ENCODE measurements at regions of chr3 and their contacts with region 1.

Region 1: GRCh38 chr3:58008140-58009025 is at the start of gene FLNB:
- DNase-seq: peak; percentile 61 to 83 (median 77)
- ATAC-seq: peak; percentile 95
- H3K4me3 ChIP-seq: peak within 1 kb of the TSS; percentile 100
- H3K4me3 Mint-ChIP-seq: peak within 1 kb of the TSS; percentile 78 to 93 (median 90)
- H3K27ac ChIP-seq: peak within 1 kb of the TSS; percentile 66
- H3K27ac Mint-ChIP-seq: peak within 1 kb of the TSS; percentile 61 to 95 (median 81)
- H3K4me1 ChIP-seq: peaks cover 9 to 32% of the 10 kb centered on the region in 2 donors
- H3K4me1 Mint-ChIP-seq: peaks cover 30 to 42% (median 41%) of the 10 kb centered on the region in 7 donors
- H3K27me3 ChIP-seq: no peaks in the 10 kb centered on the region
- H3K27me3 Mint-ChIP-seq: no peaks in the 10 kb centered on the region
- total RNA-seq, gene FLNB: 39.3 to 66.7 (median 64.9) TPM

Region 2: DNA sequence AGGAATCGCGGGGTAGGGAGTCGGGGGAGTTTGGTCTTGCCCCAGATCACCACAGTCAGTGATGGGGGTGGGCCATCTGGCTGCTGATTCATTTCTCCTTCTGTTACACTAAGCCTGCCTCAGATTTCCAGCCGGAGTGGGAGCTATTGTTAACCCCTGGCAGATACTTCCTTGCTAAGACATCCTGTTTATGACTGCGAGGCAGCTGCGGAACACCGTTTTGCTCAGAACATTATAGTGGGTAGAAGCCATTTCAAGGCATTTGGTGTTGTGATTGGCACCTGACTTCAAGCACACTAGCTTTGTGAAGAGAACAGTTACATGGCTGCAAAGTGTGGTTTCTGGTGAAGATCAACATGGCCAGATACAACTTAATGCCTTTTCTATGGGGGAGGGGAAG is 73.7 kb after region 1 on chr3:
- CTCF ChIA-PET with region 1: interaction called, 4 read pairs
- POLR2A ChIA-PET with region 1: interaction called, 20 read pairs
- intact Hi-C with region 1: loop called (anchors 1 to 5 kb)
- DNase-seq: peak in 8 of 9 donors; percentile 27 to 82 (median 69)
- ATAC-seq: peak; percentile 79
- H3K4me3 ChIP-seq: no peak overlapping the region
- H3K4me3 Mint-ChIP-seq: peak overlapping the region; percentile 46 to 83 (median 76)
- H3K27ac ChIP-seq: peak overlapping the region; percentile 38
- H3K27ac Mint-ChIP-seq: peak overlapping the region; percentile 85 to 97 (median 94)
- H3K4me1 ChIP-seq: peaks cover 0 to 54% of the 10 kb centered on the region in 2 donors
- H3K4me1 Mint-ChIP-seq: peaks cover 35 to 71% (median 56%) of the 10 kb centered on the region in 7 donors
- H3K27me3 ChIP-seq: no peaks in the 10 kb centered on the region
- H3K27me3 Mint-ChIP-seq: no peaks in the 10 kb centered on the region

Region 3: DNA sequence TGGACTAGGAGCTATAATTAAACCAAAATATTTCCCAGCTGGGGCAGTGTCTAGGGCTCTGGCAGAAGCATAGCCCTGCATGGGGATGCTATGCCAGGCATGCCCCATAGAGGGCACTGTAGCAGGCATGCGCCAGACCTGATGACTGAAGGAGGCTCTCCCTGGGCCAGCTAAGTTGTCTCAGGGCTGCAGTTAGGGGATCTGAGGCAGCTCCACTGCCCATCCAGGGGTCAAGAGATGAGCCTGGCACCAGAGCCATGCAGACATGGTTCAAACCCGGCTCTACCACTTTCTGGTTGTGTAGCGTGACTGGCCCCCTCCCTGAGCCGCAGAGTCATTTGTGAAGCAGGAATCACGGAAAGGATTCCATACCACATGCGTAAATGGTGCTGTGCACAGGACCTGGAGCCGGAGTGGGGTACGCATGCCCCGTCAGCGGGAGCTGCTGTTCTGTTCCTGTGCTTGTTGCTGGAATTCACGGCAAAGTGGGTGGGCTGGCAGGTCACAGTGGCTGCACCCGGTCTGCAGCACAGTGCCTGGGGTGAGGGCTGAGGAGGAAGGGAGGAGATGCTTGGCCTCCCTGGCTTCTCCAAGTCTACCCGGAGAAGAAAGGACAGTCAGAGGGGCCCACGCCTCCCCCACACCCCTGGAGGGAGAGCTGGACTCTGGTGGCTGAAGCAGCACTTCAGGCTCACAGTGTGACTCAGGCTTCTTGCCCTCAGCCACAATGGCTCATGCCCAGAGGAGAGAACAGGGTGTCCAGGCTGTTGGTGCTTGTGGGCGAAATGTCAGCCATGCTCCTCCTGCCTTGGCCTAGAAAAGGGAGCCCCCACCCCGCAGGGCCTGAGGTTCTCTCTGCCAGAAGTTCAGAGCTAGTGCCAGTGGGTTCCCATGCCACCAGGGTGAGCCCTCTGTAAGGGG is 159.3 kb after region 1 on chr3:
- CTCF ChIA-PET with region 1: interaction called, 22 read pairs
- POLR2A ChIA-PET with region 1: interaction called, 3 read pairs
- intact Hi-C with region 1: no loop called
- DNase-seq: peak; percentile 16 to 66 (median 42)
- ATAC-seq: peak; percentile 92
- H3K4me3 ChIP-seq: no peak overlapping the region
- H3K4me3 Mint-ChIP-seq: no peak overlapping the region
- H3K27ac ChIP-seq: no peak overlapping the region
- H3K27ac Mint-ChIP-seq: peak overlapping the region in 2 of 9 donors; percentile 19 to 33
- H3K4me1 ChIP-seq: no peaks in the 10 kb centered on the region
- H3K4me1 Mint-ChIP-seq: no peaks in the 10 kb centered on the region
- H3K27me3 ChIP-seq: no peaks in the 10 kb centered on the region
- H3K27me3 Mint-ChIP-seq: no peaks in the 10 kb centered on the region

Region 4: DNA sequence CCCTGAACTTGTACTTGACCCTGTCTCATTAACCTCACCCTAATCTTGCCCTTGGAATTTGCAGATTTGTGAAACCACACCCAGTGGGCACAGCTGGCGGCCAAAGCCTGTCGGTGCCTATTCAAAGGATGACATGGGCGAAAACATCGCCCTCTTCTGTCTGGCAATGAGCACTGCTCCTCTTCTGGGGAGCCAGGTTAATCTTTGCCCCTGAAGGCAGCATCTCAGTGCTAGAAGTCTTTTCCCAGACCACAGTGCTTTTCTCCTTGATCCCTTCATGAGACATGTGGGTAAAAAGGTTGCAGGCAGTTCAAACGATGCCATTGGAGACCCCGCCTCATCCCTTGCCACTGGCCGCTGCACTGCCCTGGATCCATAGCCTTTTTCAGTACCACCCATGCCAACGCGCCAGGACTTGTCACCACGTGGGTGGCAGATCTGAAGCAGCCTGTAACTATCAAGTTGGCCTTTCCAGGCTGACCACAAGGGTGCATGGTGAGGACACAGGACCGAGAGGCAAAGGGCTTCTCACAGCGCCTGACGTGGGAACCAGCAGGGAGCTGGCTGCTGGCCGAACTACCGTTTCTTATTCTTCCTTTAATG is 208.9 kb after region 1 on chr3:
- CTCF ChIA-PET with region 1: interaction called, 11 read pairs
- POLR2A ChIA-PET with region 1: no interaction called
- intact Hi-C with region 1: loop called (anchors 1 kb)
- DNase-seq: peak; percentile 21 to 64 (median 52)
- ATAC-seq: peak; percentile 86
- H3K4me3 ChIP-seq: no peak overlapping the region
- H3K4me3 Mint-ChIP-seq: peak overlapping the region in 4 of 10 donors; percentile 12 to 45 (median 26)
- H3K27ac ChIP-seq: no peak overlapping the region
- H3K27ac Mint-ChIP-seq: no peak overlapping the region
- H3K4me1 ChIP-seq: peaks cover 0 to 3% of the 10 kb centered on the region in 2 donors
- H3K4me1 Mint-ChIP-seq: peaks cover 0 to 17% (median 7%) of the 10 kb centered on the region in 7 donors
- H3K27me3 ChIP-seq: no peaks in the 10 kb centered on the region
- H3K27me3 Mint-ChIP-seq: peaks cover 3 to 10% (median 4%) of the 10 kb centered on the region in 5 donors

Region 5: DNA sequence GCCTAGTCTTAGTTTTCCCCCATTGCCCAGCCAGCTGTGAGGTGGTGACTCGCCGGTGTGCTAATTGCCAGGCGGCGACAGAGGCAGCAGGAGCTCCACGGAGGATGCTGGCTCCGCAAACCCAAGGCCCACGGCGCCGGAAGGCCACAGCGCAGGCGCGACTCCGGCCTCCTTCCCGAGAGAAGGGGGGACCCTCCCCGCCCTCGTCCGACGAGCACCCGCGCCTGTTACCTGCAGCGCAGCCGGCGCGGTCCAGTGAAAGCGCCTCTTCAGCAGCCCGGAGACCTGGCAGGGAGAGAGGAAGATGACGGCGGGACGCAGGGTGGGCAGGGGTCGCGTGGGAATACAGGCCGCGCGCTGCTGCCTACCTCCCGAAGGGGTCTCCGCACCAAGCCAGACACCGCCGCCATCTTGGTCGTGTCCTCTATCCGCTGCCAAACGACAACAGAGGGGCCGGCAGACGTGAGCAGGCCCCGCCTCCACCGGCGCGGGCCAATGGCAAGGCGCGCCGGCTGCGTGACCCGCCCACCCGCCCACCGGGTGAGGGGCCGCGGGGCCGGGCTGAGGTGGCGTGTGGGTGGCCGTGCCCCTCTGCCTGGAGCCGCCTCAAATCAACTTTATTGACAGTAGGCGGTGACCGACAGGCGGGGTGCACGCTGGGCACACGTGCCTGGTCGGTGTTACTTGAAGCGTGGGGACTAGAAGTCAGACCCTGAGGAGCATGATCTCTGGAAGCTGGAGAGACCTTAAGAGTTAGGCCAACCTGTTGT is 425.2 kb after region 1 on chr3 and contains the start of gene PDHB:
- CTCF ChIA-PET with region 1: no interaction called
- POLR2A ChIA-PET with region 1: no interaction called
- intact Hi-C with region 1: no loop called
- DNase-seq: peak; percentile 78 to 91 (median 90)
- ATAC-seq: peak; percentile 98
- H3K4me3 ChIP-seq: peak within 1 kb of the TSS; percentile 92
- H3K4me3 Mint-ChIP-seq: peak within 1 kb of the TSS; percentile 90 to 98 (median 95)
- H3K27ac ChIP-seq: peak within 1 kb of the TSS; percentile 81
- H3K27ac Mint-ChIP-seq: peak within 1 kb of the TSS; percentile 94 to 98 (median 97)
- H3K4me1 ChIP-seq: peaks cover 14 to 15% of the 10 kb centered on the region in 2 donors
- H3K4me1 Mint-ChIP-seq: peaks cover 15 to 34% (median 27%) of the 10 kb centered on the region in 7 donors
- H3K27me3 ChIP-seq: no peaks in the 10 kb centered on the region
- H3K27me3 Mint-ChIP-seq: peaks cover 0 to 9% (median 0%) of the 10 kb centered on the region in 5 donors
- total RNA-seq, gene PDHB: 30.1 to 58.1 (median 54.0) TPM

Region 6: GRCh38 chr3:58491506-58492402 is 483.4 kb after region 1 on chr3 and contains the start of gene KCTD6:
- CTCF ChIA-PET with region 1: interaction called, 3 read pairs
- POLR2A ChIA-PET with region 1: no interaction called
- intact Hi-C with region 1: loop called in 1 of 2 experiments (anchors 1 kb)
- DNase-seq: peak; percentile 72 to 95 (median 84)
- ATAC-seq: peak; percentile 93
- H3K4me3 ChIP-seq: peak within 1 kb of the TSS; percentile 95
- H3K4me3 Mint-ChIP-seq: peak within 1 kb of the TSS; percentile 92 to 99 (median 94)
- H3K27ac ChIP-seq: peak within 1 kb of the TSS; percentile 69
- H3K27ac Mint-ChIP-seq: peak within 1 kb of the TSS; percentile 83 to 97 (median 90)
- H3K4me1 ChIP-seq: peaks cover 22 to 25% of the 10 kb centered on the region in 2 donors
- H3K4me1 Mint-ChIP-seq: peaks cover 37 to 64% (median 59%) of the 10 kb centered on the region in 7 donors
- H3K27me3 ChIP-seq: no peaks in the 10 kb centered on the region
- H3K27me3 Mint-ChIP-seq: peaks cover 0 to 45% (median 0%) of the 10 kb centered on the region in 5 donors
- total RNA-seq, gene KCTD6: 4.8 to 14.2 (median 10.9) TPM

Measured in naive thymus-derived CD4-positive, alpha-beta T cell (primary cell).